Pancreas (tissue), 10 donors: ENCODE measurements at regions of chr15 and their contacts with region 1.

Region 1: DNA sequence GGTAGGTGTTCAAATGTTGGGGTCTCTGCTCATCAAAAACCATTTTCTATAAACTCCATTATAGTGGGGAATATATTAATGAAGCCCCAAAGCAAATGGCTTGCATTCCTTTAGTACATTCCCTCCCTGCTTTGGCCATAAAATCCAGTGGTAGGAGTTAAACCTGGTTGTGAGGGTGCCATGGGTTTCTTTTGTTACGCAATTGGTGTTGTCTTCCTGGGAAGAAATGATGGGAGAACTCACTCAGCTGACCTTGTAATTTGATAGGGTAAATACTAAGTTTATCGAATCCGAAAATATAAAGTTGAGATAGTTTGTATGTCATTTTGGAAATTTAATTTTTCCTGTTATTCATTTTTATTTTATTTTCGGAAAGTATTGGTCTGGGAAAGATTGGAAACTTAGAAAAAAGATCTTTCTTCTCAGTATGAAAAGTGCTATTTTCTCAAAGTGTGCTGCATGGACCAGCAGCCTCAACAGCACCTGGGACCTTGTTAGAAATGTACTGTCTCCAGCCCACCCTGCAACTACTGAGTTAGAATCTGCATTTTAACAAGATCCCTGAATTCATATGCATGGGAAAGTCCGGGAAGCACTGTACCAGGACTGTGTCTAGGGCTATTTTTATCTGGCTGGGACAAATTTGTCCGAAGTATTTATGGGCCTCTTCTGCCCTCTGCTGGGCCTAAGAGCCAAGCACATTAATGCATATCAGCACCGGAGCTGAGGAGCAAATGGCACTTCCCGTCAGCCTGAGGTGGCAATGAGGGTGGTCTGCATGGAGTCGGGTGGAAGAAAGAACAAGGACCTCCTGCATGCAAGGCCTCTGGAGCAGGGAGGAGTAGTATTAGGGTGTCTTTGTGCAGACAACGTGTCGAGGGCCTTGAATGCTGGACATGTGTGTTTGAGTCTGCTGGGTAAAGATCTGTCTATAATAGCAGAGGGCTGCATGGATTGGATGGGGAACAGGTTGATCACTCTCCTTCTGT is 54.7 kb downstream of the FAM81A start:
- DNase-seq: peak in 5 of 6 donors; percentile 37 to 69 (median 45)
- ATAC-seq: peak; percentile 99 to 100 (median 100)
- H3K4me3 ChIP-seq: no peak overlapping the region
- H3K27ac ChIP-seq: no peak overlapping the region
- H3K4me1 ChIP-seq: no peaks in the 10 kb centered on the region
- H3K27me3 ChIP-seq: no peaks in the 10 kb centered on the region
- CTCF ChIP-seq: peak; percentile 47 to 80 (median 72)

Region 2: GRCh38 chr15:58977887-58978286 is 514.8 kb before region 1 on chr15:
- intact Hi-C with region 1: loop called in 1 of 3 experiments (anchors 10 kb)
- DNase-seq: no peak
- ATAC-seq: no peak
- H3K4me3 ChIP-seq: no peak overlapping the region
- H3K27ac ChIP-seq: no peak overlapping the region
- H3K4me1 ChIP-seq: peaks cover 0 to 6% (median 3%) of the 10 kb centered on the region in 3 donors
- H3K27me3 ChIP-seq: no peaks in the 10 kb centered on the region
- CTCF ChIP-seq: no peak

Region 3: GRCh38 chr15:59160880-59161593 is 331.6 kb before region 1 on chr15:
- intact Hi-C with region 1: loop called in 1 of 3 experiments (anchors 10 kb)
- DNase-seq: peak in 1 of 6 donors; percentile 47
- ATAC-seq: peak in 3 of 4 donors; percentile 45 to 75 (median 64)
- H3K4me3 ChIP-seq: no peak overlapping the region
- H3K27ac ChIP-seq: no peak overlapping the region
- H3K4me1 ChIP-seq: peaks cover 0 to 4% (median 4%) of the 10 kb centered on the region in 3 donors
- H3K27me3 ChIP-seq: no peaks in the 10 kb centered on the region
- CTCF ChIP-seq: no peak

Region 4: DNA sequence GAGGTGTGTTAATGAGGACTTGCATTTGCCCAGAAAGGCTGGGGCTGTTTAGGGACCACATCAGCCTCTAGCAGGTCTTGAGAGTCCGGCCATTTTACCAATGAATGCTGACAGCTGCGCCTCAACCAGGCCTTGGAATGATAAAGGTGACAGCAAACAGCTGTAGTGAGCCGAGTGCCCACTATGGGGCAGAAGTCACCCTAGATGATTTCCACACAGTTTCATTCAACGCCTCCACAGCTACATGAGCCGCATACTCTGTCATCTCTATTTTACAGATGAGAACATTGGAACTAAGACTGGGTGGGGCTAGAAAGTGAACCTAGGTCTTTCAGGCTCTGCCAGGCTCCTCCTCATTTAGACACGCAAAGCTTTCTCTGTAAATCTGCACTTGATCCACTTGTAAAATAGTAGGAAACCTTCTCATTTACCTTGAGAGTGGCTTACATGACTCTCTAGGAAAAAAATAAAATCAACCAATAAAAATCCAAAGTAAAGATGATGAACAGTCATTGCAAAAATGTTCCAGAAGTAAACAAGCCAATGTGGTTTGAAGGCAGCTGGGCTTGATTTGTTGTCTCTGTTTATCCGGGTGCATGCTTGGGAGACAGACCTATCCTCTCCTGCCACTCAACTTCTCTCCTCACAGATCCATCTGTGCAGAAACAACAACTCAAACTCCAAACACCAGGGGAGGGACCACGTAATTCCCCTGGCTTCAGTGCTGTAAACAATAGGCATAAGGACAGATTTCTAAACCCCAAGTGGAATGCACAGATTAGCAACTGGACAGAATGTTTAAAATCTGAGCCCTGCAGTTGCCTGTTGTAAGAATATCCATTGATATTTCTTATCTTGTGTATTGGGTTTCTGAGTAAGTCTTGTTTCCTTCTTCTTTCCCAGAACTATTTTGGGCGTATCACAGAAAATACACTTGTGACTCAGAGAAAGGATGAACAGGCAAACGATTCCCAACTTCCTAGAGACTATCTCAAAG is 317.6 kb before region 1 on chr15:
- intact Hi-C with region 1: loop called in 1 of 3 experiments (anchors 10 kb)
- DNase-seq: peak in 1 of 6 donors; percentile 28
- ATAC-seq: peak in 3 of 4 donors; percentile 61 to 74 (median 65)
- H3K4me3 ChIP-seq: no peak overlapping the region
- H3K27ac ChIP-seq: peak overlapping the region in 1 of 4 donors; percentile 34
- H3K4me1 ChIP-seq: peaks cover 0 to 7% (median 0%) of the 10 kb centered on the region in 3 donors
- H3K27me3 ChIP-seq: no peaks in the 10 kb centered on the region
- CTCF ChIP-seq: peak in 3 of 4 donors; percentile 11 to 22 (median 18)

Region 5: DNA sequence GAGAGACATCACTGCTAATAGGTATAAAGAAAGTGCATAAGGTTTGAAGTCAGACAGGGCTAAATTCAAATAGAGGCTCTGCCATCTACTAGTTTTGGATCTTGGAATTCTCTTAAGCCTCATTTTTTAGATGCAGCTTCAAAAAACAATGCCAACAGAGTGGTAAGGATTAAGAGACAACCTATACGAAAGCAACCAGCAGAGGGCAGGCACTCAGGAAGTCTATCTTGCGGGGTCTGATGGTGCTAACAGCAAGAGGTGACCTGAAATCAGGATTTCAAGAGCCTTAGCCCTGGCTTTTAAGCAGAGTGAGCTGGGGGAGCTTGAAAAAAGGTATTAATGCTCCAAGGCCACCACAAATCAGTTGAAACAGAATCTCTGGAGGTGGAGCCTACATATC is 245.3 kb before region 1 on chr15:
- intact Hi-C with region 1: loop called in 2 of 3 experiments (anchors 10 kb)
- DNase-seq: peak in 3 of 6 donors; percentile 23 to 56 (median 30)
- ATAC-seq: peak; percentile 76 to 91 (median 86)
- H3K4me3 ChIP-seq: no peak overlapping the region
- H3K27ac ChIP-seq: no peak overlapping the region
- H3K4me1 ChIP-seq: peaks cover 0 to 6% (median 0%) of the 10 kb centered on the region in 3 donors
- H3K27me3 ChIP-seq: no peaks in the 10 kb centered on the region
- CTCF ChIP-seq: peak; percentile 20 to 41 (median 32)

Region 6: GRCh38 chr15:59329570-59330350 is 162.9 kb before region 1 on chr15:
- intact Hi-C with region 1: no loop called
- DNase-seq: peak in 3 of 6 donors; percentile 43 to 61 (median 49)
- ATAC-seq: peak; percentile 83 to 94 (median 92)
- H3K4me3 ChIP-seq: no peak overlapping the region
- H3K27ac ChIP-seq: peak overlapping the region; percentile 18 to 67 (median 62)
- H3K4me1 ChIP-seq: peaks cover 11 to 41% (median 21%) of the 10 kb centered on the region in 3 donors
- H3K27me3 ChIP-seq: no peaks in the 10 kb centered on the region
- CTCF ChIP-seq: no peak